GM12878 (cell line): ENCODE measurements at regions of chr20 and their contacts with region 1.

Region 1: GRCh38 chr20:53915446-53916172 is 154.8 kb downstream of the BCAS1 start:
- DNase-seq: peak; percentile 89
- ATAC-seq: peak; percentile 84
- H3K4me3 ChIP-seq: peak overlapping the region; percentile 56
- H3K27ac ChIP-seq: peak overlapping the region; percentile 97
- H3K4me1 ChIP-seq: peaks cover 31% of the 10 kb centered on the region
- H3K27me3 ChIP-seq: no peaks in the 10 kb centered on the region
- CTCF ChIP-seq: peak; percentile 80 to 93 (median 90)
- EP300 ChIP-seq: no peak
- POLR2A ChIP-seq: peak; percentile 31; the same call in 1 of the 2 replicates
- RAD21 ChIP-seq: peak; percentile 94

Region 2: DNA sequence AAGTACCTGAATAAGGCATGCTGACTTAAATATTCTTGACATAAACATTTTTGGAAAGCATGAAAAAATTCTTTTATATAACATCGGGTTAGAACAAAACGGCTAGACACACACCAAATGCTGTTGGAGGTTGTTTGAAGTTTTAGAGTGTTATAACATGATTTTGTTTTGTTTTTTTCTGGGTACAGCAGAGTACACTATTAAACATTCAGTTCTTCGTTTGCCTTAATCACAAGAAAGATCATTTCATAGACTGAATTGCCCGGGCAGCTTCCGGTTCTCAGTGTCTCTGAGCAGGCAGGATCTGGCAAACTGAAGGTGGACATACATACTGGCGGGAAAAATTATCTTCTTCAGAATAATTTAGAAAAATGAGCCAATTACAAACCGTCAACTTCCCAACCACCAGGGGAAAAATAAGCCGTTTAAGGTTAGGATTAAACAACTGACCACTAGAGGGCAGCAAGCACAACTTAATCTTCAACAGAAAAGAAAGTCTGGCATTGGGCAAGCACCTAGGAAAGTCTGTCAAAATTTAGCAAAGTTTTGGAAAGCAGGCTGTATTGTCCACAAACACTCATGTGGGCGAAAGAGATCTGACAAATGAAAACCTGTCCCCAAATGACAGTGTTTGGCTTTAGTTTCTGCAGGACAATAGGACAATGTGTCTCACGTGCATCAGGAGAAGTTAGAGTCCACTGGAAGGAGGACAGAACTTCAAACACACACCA is 337.0 kb before region 1 on chr20:
- CTCF ChIA-PET with region 1: interaction called, 38 read pairs
- POLR2A ChIA-PET with region 1: interaction called, 6 read pairs
- RAD21 ChIA-PET with region 1: interaction called, 19 read pairs
- SMC1A ChIA-PET with region 1: interaction called, 33 read pairs
- in situ Hi-C with region 1: no loop called
- intact Hi-C with region 1: loop called (anchors 1 kb)
- DNase-seq: peak; percentile 76
- ATAC-seq: peak; percentile 61
- H3K4me3 ChIP-seq: peak overlapping the region; percentile 79
- H3K27ac ChIP-seq: peak overlapping the region; percentile 69
- H3K4me1 ChIP-seq: peaks cover 9% of the 10 kb centered on the region
- H3K27me3 ChIP-seq: no peaks in the 10 kb centered on the region
- CTCF ChIP-seq: peak; percentile 65 to 82 (median 79)
- EP300 ChIP-seq: no peak
- POLR2A ChIP-seq: no peak
- RAD21 ChIP-seq: peak; percentile 91

Region 3: DNA sequence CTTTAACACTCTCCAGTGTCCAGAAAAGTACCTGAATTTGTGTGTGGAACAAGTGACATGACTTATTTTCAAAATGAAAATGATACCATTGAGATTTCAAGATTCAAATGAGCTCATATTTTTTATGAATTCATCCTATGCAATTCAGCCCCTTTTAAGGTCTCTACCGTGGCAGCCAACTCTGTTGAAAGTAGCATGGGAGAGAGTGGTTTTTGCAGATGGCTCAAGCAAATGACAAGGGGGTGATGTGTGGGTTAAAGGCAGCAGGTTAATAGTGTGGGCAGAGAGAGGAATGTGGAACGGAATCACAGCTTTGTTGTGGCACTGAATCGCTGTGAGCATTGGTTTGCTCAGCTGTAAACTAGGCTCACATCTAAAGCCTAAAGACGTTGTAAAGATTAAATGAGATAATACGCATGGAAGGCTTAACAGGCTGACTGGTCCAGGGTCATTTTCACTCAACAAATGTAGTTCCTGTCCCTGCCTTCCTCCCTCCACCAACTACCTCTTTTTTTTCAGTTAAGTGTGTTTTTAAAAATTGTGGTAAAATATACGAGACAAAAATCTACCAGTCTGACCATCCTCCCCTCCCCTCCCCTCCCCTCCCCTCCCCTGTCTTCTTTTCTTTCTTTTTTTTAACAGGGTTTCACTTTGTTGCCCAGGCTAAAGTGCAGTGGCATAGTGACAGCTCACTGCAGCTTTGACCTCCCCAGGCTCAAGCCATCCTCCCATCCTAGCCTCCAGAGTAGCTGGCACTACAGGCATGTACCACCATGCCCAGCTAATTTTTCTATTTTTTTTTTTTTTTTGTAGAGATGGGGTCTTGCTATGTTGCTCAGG is 207.3 kb before region 1 on chr20:
- CTCF ChIA-PET with region 1: interaction called, 3 read pairs
- POLR2A ChIA-PET with region 1: interaction called, 3 read pairs
- RAD21 ChIA-PET with region 1: interaction called, 12 read pairs
- SMC1A ChIA-PET with region 1: interaction called, 9 read pairs
- in situ Hi-C with region 1: no loop called
- intact Hi-C with region 1: loop called (anchors 5 kb)
- DNase-seq: peak; percentile 94
- ATAC-seq: peak; percentile 83
- H3K4me3 ChIP-seq: peak overlapping the region; percentile 43; the same call in 1 of the 2 replicates
- H3K27ac ChIP-seq: peak overlapping the region; percentile 97
- H3K4me1 ChIP-seq: peaks cover 45% of the 10 kb centered on the region
- H3K27me3 ChIP-seq: no peaks in the 10 kb centered on the region
- CTCF ChIP-seq: no peak
- EP300 ChIP-seq: peak in 1 of 2 experiments; percentile 35; a peak in 3 of 4 replicates
- POLR2A ChIP-seq: peak; percentile 36
- RAD21 ChIP-seq: 0 out of 2 replicates have a peak, but pooled peaks have one; percentile 6

Region 4: DNA sequence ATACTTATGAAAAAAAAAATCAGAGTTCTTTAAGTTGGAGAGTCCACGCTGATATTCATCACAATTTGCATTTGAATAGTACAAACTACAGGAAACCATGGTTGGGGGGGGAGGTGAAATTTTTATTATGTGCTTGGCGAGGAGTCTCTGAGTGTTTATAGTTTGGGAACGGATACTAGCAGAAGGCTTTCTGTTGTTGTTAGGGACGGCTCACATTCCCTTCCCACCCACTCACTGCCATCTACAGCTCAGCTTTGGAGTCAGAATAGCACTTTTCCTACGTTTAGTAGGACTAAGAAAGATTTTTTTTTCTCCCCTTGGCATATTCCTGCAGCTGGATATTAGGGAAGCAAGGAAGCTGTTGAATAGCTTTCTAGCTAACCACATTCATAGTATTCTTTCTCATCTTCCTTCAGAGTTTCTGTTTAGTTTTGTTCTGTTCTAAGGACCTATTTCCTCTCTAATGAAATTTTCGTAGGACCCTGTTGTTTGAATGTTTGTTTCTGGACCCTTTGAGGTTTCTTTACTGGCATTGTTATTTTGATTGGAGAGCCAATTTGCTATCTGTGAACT is 86.8 kb before region 1 on chr20:
- CTCF ChIA-PET with region 1: interaction called, 7 read pairs
- POLR2A ChIA-PET with region 1: interaction called, 3 read pairs
- RAD21 ChIA-PET with region 1: interaction called, 6 read pairs
- SMC1A ChIA-PET with region 1: interaction called, 20 read pairs
- in situ Hi-C with region 1: no loop called
- intact Hi-C with region 1: no loop called
- DNase-seq: no peak
- ATAC-seq: peak; percentile 2; the same call in 2 of the 3 replicates
- H3K4me3 ChIP-seq: peak overlapping the region; percentile 56
- H3K27ac ChIP-seq: peak overlapping the region; percentile 91
- H3K4me1 ChIP-seq: peaks cover 37% of the 10 kb centered on the region
- H3K27me3 ChIP-seq: no peaks in the 10 kb centered on the region
- CTCF ChIP-seq: 0 out of 6 replicates have a peak, but pooled peaks of 1 of the 3 experiments have one; percentile 4
- EP300 ChIP-seq: no peak
- POLR2A ChIP-seq: no peak
- RAD21 ChIP-seq: 0 out of 2 replicates have a peak, but pooled peaks have one; percentile 1

Region 5: DNA sequence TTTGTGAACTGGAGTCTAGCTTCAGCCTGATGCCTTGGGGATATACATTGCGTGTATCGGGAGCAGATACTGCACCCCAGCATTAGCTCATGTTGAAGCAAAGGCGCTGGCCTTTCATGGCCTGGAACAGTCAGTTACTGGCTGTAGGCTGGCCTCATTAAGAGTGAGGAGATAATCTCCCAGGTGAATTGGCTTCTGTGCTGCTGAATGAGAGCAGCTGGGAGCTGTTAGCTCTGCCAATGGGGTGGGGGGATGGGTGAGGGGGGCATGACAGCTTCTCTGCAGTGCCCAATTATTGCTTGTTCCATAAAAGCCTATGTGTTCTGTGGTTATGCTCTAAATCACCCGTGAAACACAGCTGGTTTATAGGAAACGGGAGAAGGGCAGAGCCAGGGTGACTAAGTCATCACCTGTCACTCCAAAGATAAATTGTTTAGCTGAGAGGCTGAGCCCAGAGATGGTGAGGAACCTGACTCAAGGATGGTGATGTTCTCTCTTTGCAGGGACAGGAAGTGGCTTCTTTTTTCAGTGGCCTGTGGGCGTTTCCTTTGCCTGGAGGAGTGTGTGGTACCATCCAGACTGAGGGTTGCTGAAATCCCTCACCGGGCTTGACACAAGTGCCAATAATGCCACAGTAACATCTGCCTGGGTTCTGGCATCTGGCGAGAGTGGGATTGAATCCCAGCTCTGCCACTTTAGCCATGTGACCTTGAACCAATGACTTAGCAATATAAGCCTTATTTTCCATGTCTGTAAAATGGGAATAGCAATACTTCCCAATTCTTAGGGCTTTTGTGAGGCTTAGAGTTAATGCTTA is 16.1 kb before region 1 on chr20:
- CTCF ChIA-PET with region 1: interaction called, 16 read pairs
- POLR2A ChIA-PET with region 1: interaction called, 6 read pairs
- RAD21 ChIA-PET with region 1: interaction called, 51 read pairs
- SMC1A ChIA-PET with region 1: interaction called, 117 read pairs
- in situ Hi-C with region 1: no loop called
- intact Hi-C with region 1: no loop called
- DNase-seq: peak; percentile 95
- ATAC-seq: peak; percentile 88
- H3K4me3 ChIP-seq: no peak overlapping the region
- H3K27ac ChIP-seq: peak overlapping the region; percentile 62
- H3K4me1 ChIP-seq: peaks cover 39% of the 10 kb centered on the region
- H3K27me3 ChIP-seq: no peaks in the 10 kb centered on the region
- CTCF ChIP-seq: no peak
- EP300 ChIP-seq: peak in 1 of 2 experiments; percentile 74; a peak in 2 of 4 replicates
- POLR2A ChIP-seq: no peak
- RAD21 ChIP-seq: no peak

Region 6: GRCh38 chr20:53939572-53940359 is 24.2 kb after region 1 on chr20:
- CTCF ChIA-PET with region 1: interaction called, 258 read pairs
- POLR2A ChIA-PET with region 1: interaction called, 29 read pairs
- RAD21 ChIA-PET with region 1: interaction called, 394 read pairs
- SMC1A ChIA-PET with region 1: interaction called, 384 read pairs
- in situ Hi-C with region 1: no loop called
- intact Hi-C with region 1: loop called (anchors 1 kb)
- DNase-seq: peak; percentile 93
- ATAC-seq: peak; percentile 81
- H3K4me3 ChIP-seq: 0 out of 2 replicates have a peak overlapping the region, but pooled peaks have one; percentile 63
- H3K27ac ChIP-seq: peak overlapping the region; percentile 84
- H3K4me1 ChIP-seq: peaks cover 54% of the 10 kb centered on the region
- H3K27me3 ChIP-seq: no peaks in the 10 kb centered on the region
- CTCF ChIP-seq: peak; percentile 70 to 96 (median 83)
- EP300 ChIP-seq: 0 out of 4 replicates have a peak, but pooled peaks of 1 of the 2 experiments have one; percentile 10
- POLR2A ChIP-seq: no peak
- RAD21 ChIP-seq: peak; percentile 98

Region 7: DNA sequence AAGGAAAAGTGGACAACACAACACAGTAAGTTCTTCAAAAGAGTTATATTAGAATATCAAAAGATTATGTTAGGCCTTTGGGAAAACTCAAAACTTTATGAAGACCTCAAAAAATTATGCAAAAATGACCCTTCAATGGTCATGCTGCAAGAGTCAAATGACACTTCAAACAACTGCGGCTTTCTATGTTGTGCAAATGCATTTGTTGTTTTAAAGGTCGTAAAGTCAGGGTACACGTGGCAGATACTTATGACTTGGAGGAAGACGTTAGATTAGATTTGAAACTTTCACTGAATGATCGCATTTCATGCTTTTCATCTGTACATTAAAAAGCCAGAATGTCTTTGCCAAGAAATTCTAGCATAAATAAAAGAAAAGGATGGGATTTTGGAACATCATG is 123.4 kb after region 1 on chr20:
- CTCF ChIA-PET with region 1: no interaction called
- POLR2A ChIA-PET with region 1: no interaction called
- RAD21 ChIA-PET with region 1: no interaction called
- SMC1A ChIA-PET with region 1: no interaction called
- in situ Hi-C with region 1: no loop called
- intact Hi-C with region 1: no loop called
- DNase-seq: no peak
- ATAC-seq: no peak
- H3K4me3 ChIP-seq: no peak overlapping the region
- H3K27ac ChIP-seq: no peak overlapping the region
- H3K4me1 ChIP-seq: peaks cover 6% of the 10 kb centered on the region
- H3K27me3 ChIP-seq: no peaks in the 10 kb centered on the region
- CTCF ChIP-seq: no peak
- EP300 ChIP-seq: no peak
- POLR2A ChIP-seq: no peak
- RAD21 ChIP-seq: no peak